Activated naive CD4-positive, alpha-beta T cell treated with anti-CD3 and anti-CD28 coated beads, Interleukin-2, amount 10 ng/mL, durations not matched to agents 7 days and 5 days (primary cell): ENCODE measurements at regions of chr12 and their contacts with region 1.

Region 1: DNA sequence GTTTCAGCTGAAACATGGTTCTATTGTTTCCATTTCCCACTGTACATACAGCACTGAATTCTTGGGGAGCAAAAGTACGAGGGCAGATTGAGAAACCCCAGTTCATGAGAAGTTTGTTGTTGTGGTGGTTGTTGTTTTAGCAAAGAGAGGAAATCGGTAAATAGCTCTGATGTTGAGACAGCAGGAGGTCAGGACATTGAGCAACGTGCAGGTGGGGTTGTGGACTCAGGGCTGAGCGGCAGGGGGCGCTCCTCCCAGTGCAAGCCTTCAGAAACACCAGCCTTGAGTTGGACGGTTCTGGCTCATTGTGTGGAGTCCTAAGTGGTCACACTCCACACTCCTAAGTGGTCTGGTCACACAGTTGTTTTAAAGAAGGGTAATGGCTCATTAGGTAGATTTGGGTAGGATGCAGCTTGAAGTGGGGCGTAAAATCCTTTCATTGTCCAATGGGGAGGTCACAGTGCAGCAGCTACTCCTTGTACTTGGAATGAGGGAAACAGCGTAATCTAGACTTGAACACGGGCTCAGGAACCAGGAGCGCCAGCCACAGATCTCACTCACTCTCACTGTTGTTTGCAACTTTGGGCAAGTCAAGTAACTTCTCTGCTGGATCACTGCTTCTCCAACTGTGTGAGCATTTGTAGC is 14.5 kb upstream of the PWP1 start:
- DNase-seq: peak; percentile 59
- H3K4me3 Mint-ChIP-seq: no peak overlapping the region
- H3K27ac Mint-ChIP-seq: no peak overlapping the region
- H3K4me1 Mint-ChIP-seq: peaks cover 6% of the 10 kb centered on the region
- H3K27me3 Mint-ChIP-seq: peaks cover 46% of the 10 kb centered on the region

Region 2: GRCh38 chr12:107660235-107660634 is 10.9 kb before region 1 on chr12:
- CTCF ChIA-PET with region 1: interaction called, 15 read pairs
- DNase-seq: no peak
- H3K4me3 Mint-ChIP-seq: no peak overlapping the region
- H3K27ac Mint-ChIP-seq: no peak overlapping the region
- H3K4me1 Mint-ChIP-seq: peaks cover 10% of the 10 kb centered on the region
- H3K27me3 Mint-ChIP-seq: no peaks in the 10 kb centered on the region

Region 3: GRCh38 chr12:107684990-107685359 is 13.9 kb after region 1 on chr12:
- CTCF ChIA-PET with region 1: interaction called, 35 read pairs
- DNase-seq: no peak
- H3K4me3 Mint-ChIP-seq: peak overlapping the region; percentile 92
- H3K27ac Mint-ChIP-seq: peak overlapping the region; percentile 97
- H3K4me1 Mint-ChIP-seq: peaks cover 30% of the 10 kb centered on the region
- H3K27me3 Mint-ChIP-seq: peaks cover 15% of the 10 kb centered on the region

Region 4: GRCh38 chr12:107912421-107913004 is 241.4 kb after region 1 on chr12:
- CTCF ChIA-PET with region 1: interaction called, 12 read pairs
- DNase-seq: peak; percentile 68
- H3K4me3 Mint-ChIP-seq: peak overlapping the region; percentile 66
- H3K27ac Mint-ChIP-seq: no peak overlapping the region
- H3K4me1 Mint-ChIP-seq: peaks cover 3% of the 10 kb centered on the region
- H3K27me3 Mint-ChIP-seq: peaks cover 39% of the 10 kb centered on the region